Left cardiac atrium (tissue), 4 donors: ENCODE measurements at regions of chr4 and their contacts with region 1.

Region 1: GRCh38 chr4:99808260-99808857 is 8.3 kb upstream of the DAPP1 start:
- DNase-seq: peak; percentile 48
- ATAC-seq: peak; percentile 43 to 86

Region 2: GRCh38 chr4:99665983-99666382 is 142.4 kb before region 1 on chr4:
- intact Hi-C with region 1: loop called in 1 of 2 experiments (anchors 10 kb)
- DNase-seq: no peak
- ATAC-seq: no peak

Region 3: GRCh38 chr4:99683895-99684294 is 124.5 kb before region 1 on chr4:
- intact Hi-C with region 1: loop called in 1 of 2 experiments (anchors 5 kb)
- DNase-seq: no peak
- ATAC-seq: peak in 1 of 2 donors; percentile 39

Region 4: DNA sequence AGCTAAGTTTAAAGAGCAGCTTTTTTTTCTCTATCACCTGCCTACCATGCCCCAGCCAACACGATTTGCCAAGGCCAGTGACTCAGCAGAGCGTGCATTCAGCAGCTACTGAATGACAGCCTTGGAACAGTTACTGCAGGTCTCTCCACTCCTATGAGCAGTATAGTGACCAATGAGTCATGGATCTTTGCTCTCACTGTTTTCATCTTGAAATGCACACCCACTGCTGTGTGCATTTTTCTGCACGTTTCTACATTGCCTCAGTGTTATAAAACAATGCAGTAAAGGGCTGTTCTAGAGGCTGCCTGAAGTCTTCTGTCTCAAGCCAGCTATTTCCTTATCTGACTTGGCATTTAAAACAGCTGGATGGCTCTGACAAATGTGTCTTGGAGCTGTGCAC is 84.7 kb before region 1 on chr4:
- intact Hi-C with region 1: loop called in 1 of 2 experiments (anchors 10 kb)
- DNase-seq: peak; percentile 64
- ATAC-seq: peak; percentile 77 to 98

Region 5: DNA sequence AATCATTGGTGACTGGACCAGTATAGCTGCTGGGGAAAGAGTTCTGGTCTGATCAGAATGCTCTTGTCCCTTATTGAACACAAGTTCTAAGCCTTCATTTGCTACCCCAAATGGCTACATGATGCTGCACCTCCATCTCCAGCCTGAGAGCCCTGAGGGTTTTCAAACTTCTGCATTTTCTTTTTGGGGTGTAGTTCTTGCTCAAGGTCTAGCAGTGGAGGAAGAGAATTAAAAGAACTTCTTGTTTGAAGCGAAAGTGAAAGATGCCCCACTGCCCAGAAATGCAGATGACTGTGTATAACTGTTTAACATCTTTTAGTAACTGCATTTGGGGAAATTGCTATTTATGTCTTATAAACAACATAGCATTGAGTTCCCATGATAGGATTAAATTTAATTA is 47.3 kb after region 1 on chr4:
- intact Hi-C with region 1: no loop called
- DNase-seq: no peak
- ATAC-seq: peak in 1 of 2 donors; percentile 68

Region 6: GRCh38 chr4:99949034-99949998 is 141.0 kb after region 1 on chr4:
- intact Hi-C with region 1: loop called in 1 of 2 experiments (anchors 5 kb)
- DNase-seq: peak; percentile 87
- ATAC-seq: peak; percentile 35 to 39